ENCODE measurements at regions of chr15 and their contacts with region 1.

Region 1: GRCh38 chr15:78469031-78469430 is 31.0 kb downstream of the IREB2 start:
- DNase-seq: no peak
- H3K4me3 Mint-ChIP-seq: no peak overlapping the region
- H3K27ac Mint-ChIP-seq: no peak overlapping the region
- H3K4me1 Mint-ChIP-seq: no peaks in the 10 kb centered on the region
- H3K27me3 Mint-ChIP-seq: no peaks in the 10 kb centered on the region
- CTCF ChIP-seq: no peak

Region 2: DNA sequence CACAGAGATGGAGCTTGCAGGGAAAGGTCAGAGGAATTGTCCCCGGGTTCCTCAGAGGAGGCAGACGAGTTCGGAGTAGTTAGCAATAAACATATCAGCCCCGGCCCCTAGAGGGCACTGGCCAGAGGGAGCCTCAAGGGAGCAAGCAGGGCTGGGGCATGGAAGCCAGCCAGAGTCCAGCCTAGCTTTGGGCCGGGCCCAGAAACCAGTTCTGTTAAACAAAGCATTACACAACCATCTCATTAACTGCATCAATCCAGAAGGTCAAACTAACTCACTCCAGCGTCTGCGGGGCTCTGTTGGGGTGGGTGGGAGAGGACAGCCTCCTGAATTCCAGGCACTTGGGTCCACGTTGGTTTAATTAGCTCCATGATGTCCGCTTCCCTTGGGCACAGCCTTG is 72.1 kb before region 1 on chr15:
- CTCF ChIA-PET with region 1: no interaction called
- POLR2A ChIA-PET with region 1: no interaction called
- intact Hi-C with region 1: no loop called
- DNase-seq: no peak
- H3K4me3 Mint-ChIP-seq: no peak overlapping the region
- H3K27ac Mint-ChIP-seq: no peak overlapping the region
- H3K4me1 Mint-ChIP-seq: no peaks in the 10 kb centered on the region
- H3K27me3 Mint-ChIP-seq: no peaks in the 10 kb centered on the region
- CTCF ChIP-seq: no peak

Region 3: GRCh38 chr15:78481917-78482316 is 12.9 kb after region 1 on chr15:
- CTCF ChIA-PET with region 1: interaction called, 12 read pairs
- POLR2A ChIA-PET with region 1: interaction called, 3 read pairs
- intact Hi-C with region 1: no loop called
- DNase-seq: no peak
- H3K4me3 Mint-ChIP-seq: no peak overlapping the region
- H3K27ac Mint-ChIP-seq: no peak overlapping the region
- H3K4me1 Mint-ChIP-seq: no peaks in the 10 kb centered on the region
- H3K27me3 Mint-ChIP-seq: no peaks in the 10 kb centered on the region
- CTCF ChIP-seq: no peak